ENCODE measurements at regions of chr6 and their contacts with region 1.

Region 1: DNA sequence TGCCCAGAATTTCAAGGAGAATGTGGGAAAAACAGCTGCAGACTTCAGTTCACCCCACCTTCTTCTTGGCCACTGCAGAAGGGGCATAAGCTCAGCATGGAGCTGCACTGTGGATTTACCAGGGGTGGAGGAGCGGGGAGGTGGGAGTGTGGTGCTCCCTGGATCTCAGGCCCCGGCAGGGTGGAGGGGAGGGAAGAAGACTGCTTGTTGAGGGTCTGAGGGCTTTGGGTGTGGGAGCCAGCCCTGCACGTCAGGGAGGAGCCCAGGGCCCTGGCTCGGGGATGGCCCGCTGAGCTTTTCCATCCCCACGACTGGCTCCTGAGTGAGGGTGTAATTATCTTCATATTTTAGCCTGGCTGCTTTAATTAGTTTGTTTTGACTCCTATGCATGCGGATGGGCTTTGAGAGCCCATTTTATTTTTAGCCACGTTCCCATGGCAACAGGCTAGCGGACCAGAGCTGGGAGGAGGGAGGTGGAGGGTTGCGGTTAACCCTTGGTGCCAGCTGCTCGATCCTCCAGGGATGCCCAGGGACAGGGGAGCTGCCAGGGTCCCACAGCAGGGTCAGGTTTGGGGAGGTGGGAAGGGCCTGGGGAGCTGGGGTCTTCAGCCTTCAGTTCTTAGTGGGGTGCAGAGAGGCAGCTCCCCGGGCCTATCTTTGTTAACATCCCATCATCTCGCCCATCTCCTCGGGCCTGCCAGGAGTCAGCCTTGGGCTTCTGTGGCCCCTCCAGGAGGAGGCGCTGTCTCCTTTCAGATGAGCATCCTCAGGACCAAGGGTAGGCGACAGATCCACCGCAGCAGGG is 68.2 kb downstream of the RAB44 start:
- DNase-seq: peak; percentile 91
- H3K4me3 Mint-ChIP-seq: no peak overlapping the region
- H3K27ac Mint-ChIP-seq: no peak overlapping the region
- H3K4me1 Mint-ChIP-seq: peaks cover 27% of the 10 kb centered on the region
- H3K27me3 Mint-ChIP-seq: no peaks in the 10 kb centered on the region

Region 2: DNA sequence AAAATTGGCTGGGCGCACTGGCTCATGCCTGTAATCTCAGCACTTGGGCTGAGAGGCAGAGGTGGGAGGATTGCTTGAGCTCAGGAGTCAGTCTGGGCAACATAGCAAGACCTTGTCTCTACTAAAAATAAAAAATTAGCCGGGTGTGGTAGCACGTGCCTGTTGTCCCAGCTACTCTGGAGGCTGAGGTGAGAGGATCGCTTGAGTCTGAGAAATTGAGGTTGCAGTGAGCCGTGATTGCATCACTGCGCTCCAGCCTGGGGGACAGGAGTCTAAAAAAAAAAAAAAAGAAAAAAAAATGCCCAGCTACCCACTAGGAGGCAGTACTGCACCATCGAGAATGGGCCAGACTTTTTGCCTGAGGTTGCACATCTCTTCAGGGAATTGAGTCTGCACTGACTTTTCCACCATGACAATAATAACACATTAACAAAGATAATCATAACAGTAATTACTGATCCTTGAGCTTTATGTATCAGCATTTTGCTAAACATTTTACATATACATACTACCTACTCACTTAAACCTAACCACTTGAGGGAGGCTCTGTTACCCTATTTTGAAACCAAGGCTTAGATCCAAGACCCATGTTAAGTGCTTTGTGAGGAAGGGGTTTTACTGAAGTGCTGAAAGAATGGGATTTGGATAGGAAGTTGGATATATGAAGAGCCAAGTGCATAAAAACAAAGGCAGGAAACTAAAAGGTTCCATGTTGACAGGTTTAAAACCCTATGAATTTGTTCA is 150.6 kb before region 1 on chr6:
- CTCF ChIA-PET with region 1: interaction called, 18 read pairs
- intact Hi-C with region 1: no loop called
- DNase-seq: peak; percentile 64
- H3K4me3 Mint-ChIP-seq: no peak overlapping the region
- H3K27ac Mint-ChIP-seq: peak overlapping the region; percentile 79
- H3K4me1 Mint-ChIP-seq: peaks cover 20% of the 10 kb centered on the region
- H3K27me3 Mint-ChIP-seq: no peaks in the 10 kb centered on the region

Region 3: GRCh38 chr6:36623547-36624459 is 142.0 kb before region 1 on chr6:
- CTCF ChIA-PET with region 1: interaction called, 71 read pairs
- intact Hi-C with region 1: no loop called
- DNase-seq: peak; percentile 91
- H3K4me3 Mint-ChIP-seq: no peak overlapping the region
- H3K27ac Mint-ChIP-seq: no peak overlapping the region
- H3K4me1 Mint-ChIP-seq: peaks cover 14% of the 10 kb centered on the region
- H3K27me3 Mint-ChIP-seq: no peaks in the 10 kb centered on the region

Region 4: DNA sequence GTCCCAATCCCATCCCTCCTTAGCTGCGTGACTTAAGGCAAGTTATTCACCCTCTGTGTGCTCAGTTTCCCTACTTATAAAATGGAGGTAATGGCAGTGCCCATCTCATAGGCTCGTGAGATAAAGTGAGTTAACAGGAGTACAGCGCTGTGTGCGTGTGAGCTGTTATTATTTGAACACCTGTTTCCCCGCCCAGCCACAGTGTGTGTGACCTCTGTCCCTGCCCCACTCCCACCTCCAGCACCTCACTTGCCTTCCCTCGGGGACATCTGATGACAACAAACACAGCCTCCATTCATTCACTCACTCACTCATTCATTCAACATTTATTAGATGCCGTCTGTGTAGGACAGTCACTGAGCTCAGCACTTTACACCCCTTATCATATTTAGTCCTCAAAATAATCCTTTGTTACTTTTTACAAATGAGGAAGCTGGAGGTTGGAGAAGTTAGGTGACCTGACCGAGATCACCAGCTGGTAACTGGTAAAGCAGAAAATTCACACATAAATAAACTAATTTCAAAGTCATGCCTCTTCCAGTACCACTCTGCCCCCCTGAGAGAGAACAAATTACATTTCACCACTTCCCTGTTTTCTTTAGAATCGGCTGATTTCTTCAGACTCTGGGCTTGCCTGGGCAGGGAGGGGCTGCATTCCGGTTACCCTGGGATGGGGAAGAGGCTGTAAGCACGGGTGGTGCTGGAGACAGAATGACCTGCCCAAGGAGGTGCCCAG is 14.8 kb after region 1 on chr6:
- CTCF ChIA-PET with region 1: interaction called, 278 read pairs
- intact Hi-C with region 1: loop called (anchors 1 kb)
- DNase-seq: no peak
- H3K4me3 Mint-ChIP-seq: no peak overlapping the region
- H3K27ac Mint-ChIP-seq: no peak overlapping the region
- H3K4me1 Mint-ChIP-seq: no peaks in the 10 kb centered on the region
- H3K27me3 Mint-ChIP-seq: no peaks in the 10 kb centered on the region

Region 5: DNA sequence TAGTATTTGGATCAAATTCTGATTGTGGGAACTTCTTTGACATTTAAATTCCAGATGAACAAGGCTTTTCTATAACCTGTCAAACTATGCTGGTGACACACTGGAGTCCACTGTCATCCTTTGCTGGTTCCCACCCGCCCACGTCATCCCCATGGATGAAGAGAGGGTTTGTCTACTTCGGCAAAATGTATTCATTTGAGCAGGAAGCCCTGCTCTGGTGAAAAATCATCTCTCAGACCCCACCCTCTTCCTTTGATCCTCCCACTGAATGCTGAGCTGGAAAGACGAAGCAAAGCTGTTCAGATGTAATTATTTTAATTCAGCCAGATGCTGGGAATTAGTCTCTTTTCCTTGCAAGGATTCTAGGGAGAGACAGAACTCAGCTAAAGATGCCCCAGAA is 23.0 kb after region 1 on chr6:
- CTCF ChIA-PET with region 1: interaction called, 278 read pairs
- intact Hi-C with region 1: no loop called
- DNase-seq: peak; percentile 71
- H3K4me3 Mint-ChIP-seq: no peak overlapping the region
- H3K27ac Mint-ChIP-seq: no peak overlapping the region
- H3K4me1 Mint-ChIP-seq: peaks cover 6% of the 10 kb centered on the region
- H3K27me3 Mint-ChIP-seq: no peaks in the 10 kb centered on the region

Region 6: DNA sequence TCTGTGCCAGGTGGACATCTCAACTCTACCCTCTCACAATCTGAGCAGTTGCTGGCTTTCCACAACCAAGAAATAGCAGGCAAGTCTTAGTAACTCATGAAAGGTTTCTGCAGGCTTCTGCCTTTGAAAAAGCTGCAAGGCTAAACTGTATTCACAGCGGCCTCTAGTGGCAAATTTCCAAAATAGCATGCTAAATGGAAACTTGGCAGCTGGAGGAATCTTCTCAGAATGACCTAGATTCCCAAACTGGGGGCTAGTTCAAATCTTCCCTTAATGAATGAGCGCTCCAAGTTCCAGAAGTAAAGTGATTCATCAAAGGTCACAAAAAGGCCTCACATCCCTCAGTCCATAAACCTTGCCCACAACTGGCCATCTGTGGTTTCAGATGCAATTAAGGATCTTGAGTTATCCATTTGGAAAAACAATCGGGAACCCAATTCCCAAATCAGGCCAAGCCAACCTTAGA is 85.4 kb after region 1 on chr6:
- CTCF ChIA-PET with region 1: interaction called, 60 read pairs
- intact Hi-C with region 1: loop called (anchors 1 kb)
- DNase-seq: peak; percentile 64
- H3K4me3 Mint-ChIP-seq: no peak overlapping the region
- H3K27ac Mint-ChIP-seq: no peak overlapping the region
- H3K4me1 Mint-ChIP-seq: no peaks in the 10 kb centered on the region
- H3K27me3 Mint-ChIP-seq: no peaks in the 10 kb centered on the region

Region 7: GRCh38 chr6:36874443-36875249 is 108.8 kb after region 1 on chr6 and contains the start of gene PPIL1:
- CTCF ChIA-PET with region 1: interaction called, 10 read pairs
- intact Hi-C with region 1: no loop called
- DNase-seq: peak; percentile 88
- H3K4me3 Mint-ChIP-seq: peak within 1 kb of the TSS; percentile 94
- H3K27ac Mint-ChIP-seq: peak within 1 kb of the TSS; percentile 98
- H3K4me1 Mint-ChIP-seq: peaks cover 39% of the 10 kb centered on the region
- H3K27me3 Mint-ChIP-seq: peaks cover 8% of the 10 kb centered on the region
- total RNA-seq, gene PPIL1: 42.8 to 44.0 TPM

Measured in activated naive CD4-positive, alpha-beta T cell treated with anti-CD3 and anti-CD28 coated beads for 36 hours (primary cell).